PC-3 (cell line): ENCODE measurements at regions of chr11 and their contacts with region 1.

Region 1: DNA sequence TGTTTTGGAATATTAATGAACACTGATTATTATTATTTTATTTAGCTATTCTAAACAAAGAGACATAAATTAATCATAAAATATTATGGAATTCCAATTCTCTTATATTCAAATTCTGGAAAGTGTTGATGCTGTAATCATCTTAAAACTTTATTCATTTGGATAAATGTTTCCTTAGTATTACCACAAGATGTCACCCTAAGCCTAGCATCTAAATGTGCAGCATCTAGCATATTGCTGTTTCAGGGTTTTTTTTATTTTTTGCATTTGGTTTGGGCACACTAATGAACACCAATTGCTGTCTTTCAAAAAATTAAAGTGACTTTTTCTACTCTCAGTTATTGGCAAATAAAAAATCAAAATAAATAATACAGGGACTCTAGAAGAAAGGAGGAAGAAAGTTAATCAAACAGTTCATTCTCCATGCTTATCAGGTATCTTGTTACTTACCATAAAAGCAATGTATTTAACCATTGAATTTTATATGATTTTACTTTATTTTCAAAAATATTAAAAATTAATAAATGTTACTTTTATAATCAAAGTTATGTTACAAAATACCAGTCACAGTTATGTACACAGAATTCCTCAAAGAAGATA is 31.8 kb downstream of the DLG2 start:
- DNase-seq: peak; percentile 74
- ATAC-seq: peak; percentile 58
- H3K4me3 ChIP-seq: no peak overlapping the region
- H3K27ac ChIP-seq: no peak overlapping the region
- H3K4me1 ChIP-seq: no peaks in the 10 kb centered on the region
- H3K27me3 ChIP-seq: no peaks in the 10 kb centered on the region
- CTCF ChIP-seq: peak; percentile 89

Region 2: DNA sequence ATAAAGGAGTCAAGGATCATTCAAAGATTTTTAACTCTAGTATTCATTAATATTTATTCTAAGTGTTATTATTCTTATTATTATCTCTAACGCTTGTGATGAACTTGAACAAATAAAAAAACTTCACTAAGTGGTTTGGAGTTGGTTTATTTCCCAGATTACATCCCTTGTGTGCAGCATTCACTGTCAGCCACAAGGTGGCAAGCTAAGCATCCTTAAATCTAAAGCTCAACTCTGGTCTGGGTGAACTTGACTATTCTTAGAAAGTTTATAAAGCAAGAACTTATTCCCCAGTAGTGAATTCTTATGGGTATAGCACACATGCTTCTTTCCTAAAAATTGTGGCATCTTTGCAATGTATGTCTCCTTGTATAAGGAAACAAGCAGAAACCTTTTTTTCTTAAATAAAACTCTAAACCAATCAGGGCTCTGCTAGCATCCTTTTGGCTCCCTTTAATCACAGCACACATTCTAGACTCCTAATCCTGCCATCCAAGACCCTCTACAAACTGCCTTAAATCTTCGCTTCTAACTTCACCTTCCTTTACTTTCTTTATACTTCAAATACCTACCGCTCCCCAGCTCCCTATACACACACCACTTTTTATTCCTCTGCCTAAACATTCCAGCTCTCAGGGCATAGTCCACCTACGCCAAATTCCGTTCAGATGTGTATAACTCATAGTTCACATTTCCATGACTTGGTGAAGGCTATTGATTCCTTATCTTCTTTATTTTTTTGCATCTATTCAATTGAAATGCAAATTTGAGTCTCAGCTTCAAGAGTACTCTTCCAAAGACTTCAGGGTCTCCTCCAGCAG is 1037.1 kb before region 1 on chr11:
- CTCF ChIA-PET with region 1: interaction called, 5 read pairs
- POLR2A ChIA-PET with region 1: no interaction called
- intact Hi-C with region 1: loop called (anchors 1 kb)
- DNase-seq: peak; percentile 71
- ATAC-seq: peak; percentile 88
- H3K4me3 ChIP-seq: no peak overlapping the region
- H3K27ac ChIP-seq: no peak overlapping the region
- H3K4me1 ChIP-seq: no peaks in the 10 kb centered on the region
- H3K27me3 ChIP-seq: peaks cover 9% of the 10 kb centered on the region; the same call in 1 of the 2 replicates
- CTCF ChIP-seq: peak; percentile 87

Region 3: GRCh38 chr11:84800755-84801346 is 794.5 kb before region 1 on chr11:
- CTCF ChIA-PET with region 1: interaction called, 5 read pairs
- POLR2A ChIA-PET with region 1: no interaction called
- intact Hi-C with region 1: loop called (anchors 1 kb)
- DNase-seq: peak; percentile 83
- ATAC-seq: peak; percentile 62
- H3K4me3 ChIP-seq: no peak overlapping the region
- H3K27ac ChIP-seq: no peak overlapping the region
- H3K4me1 ChIP-seq: peaks cover 12% of the 10 kb centered on the region
- H3K27me3 ChIP-seq: 0 out of 2 replicates have a peak, but pooled peaks cover 6% of the 10 kb centered on the region
- CTCF ChIP-seq: peak; percentile 88

Region 4: DNA sequence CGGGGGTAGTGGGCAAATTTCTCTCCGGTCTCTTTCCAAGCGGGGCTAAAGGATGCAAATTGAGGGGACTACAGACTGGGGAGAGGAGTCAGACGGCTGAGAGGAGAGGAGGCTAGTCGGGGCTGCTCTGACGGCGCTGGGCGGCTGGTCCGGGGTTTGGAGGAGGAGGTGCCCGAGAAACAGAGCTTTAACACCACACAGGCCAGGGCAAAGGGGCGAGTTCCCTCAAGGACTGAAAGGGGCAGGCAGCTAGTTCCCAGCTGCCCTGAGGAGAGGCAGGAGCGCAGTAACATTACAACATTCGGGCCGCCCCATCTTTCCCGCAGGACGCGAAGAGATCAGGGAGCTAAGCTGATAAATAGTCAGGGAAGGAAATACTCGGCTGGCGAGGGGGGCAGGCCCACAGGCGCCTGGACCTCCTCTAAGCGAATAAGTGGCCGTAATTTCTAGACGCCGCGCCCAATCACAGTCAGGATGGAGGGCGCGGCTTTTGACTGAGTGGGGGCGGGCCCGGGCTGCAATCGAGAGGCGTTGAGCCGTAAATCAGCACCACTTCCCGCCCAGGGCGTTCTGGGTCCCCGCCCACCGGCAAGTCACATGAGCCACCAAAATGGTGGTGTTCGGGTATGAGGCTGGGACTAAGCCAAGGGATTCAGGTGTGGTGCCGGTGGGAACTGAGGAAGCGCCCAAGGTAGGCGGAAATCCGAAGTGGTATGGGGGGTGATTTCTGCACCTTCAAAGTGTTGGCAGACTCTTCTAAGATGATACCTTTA is 32.8 kb after region 1 on chr11 and contains the start of gene TMEM126B:
- CTCF ChIA-PET with region 1: no interaction called
- POLR2A ChIA-PET with region 1: no interaction called
- intact Hi-C with region 1: loop called (anchors 2 kb)
- DNase-seq: peak; percentile 99
- ATAC-seq: peak; percentile 97
- H3K4me3 ChIP-seq: peak within 1 kb of the TSS; percentile 83
- H3K27ac ChIP-seq: peak within 1 kb of the TSS; percentile 30
- H3K4me1 ChIP-seq: peaks cover 25% of the 10 kb centered on the region
- H3K27me3 ChIP-seq: no peaks in the 10 kb centered on the region
- CTCF ChIP-seq: no peak
- total RNA-seq, gene TMEM126B: 62.1 and 79.5 TPM in 2 replicates

Region 5: GRCh38 chr11:85694386-85694980 is 99.1 kb after region 1 on chr11:
- CTCF ChIA-PET with region 1: no interaction called
- POLR2A ChIA-PET with region 1: no interaction called
- intact Hi-C with region 1: loop called (anchors 5 kb)
- DNase-seq: peak; percentile 87
- ATAC-seq: peak; percentile 59
- H3K4me3 ChIP-seq: no peak overlapping the region
- H3K27ac ChIP-seq: peak overlapping the region; percentile 10; the same call in 1 of the 2 replicates
- H3K4me1 ChIP-seq: peaks cover 34% of the 10 kb centered on the region
- H3K27me3 ChIP-seq: no peaks in the 10 kb centered on the region
- CTCF ChIP-seq: peak; percentile 94

Region 6: DNA sequence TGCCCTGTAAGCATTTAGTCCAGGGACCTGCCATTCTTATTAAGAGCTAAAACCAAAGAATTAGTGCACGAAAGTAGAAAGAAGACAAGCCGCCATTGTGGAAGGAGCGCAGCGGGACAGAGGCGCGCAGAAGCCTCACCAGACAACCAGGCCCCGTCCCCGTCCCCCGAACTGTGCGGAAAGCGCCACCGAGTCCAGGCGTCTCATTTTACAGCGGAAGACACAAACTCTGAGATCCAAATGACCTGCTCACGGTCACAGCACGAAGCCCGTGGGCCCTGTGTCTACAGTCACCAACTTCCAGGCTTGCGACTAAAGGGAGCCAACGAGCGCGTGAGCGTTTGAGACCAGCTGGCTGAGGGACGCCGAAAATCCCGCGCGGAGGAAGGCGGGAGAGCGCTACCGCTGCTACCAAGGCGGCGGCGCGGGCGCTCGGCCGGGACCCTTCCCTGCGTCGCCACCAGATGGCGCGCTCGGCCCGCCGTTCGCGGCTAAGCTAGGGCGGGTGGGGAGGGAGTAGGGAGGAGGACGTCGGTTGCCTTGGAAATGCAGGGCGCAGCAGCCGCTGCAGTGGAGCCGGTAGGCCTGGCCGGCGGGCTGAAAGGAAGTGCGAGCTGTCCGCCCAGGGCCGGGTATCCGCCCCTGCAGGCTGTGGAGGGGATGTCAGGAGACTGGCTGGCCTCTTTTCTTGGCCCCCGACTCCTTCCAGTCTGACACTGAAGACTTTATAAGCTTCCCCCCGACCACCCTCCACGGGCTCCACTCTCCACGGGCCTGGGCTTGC is 259.4 kb after region 1 on chr11:
- CTCF ChIA-PET with region 1: no interaction called
- POLR2A ChIA-PET with region 1: no interaction called
- intact Hi-C with region 1: loop called (anchors 1 kb)
- DNase-seq: peak; percentile 99
- ATAC-seq: peak; percentile 94
- H3K4me3 ChIP-seq: peak overlapping the region; percentile 78
- H3K27ac ChIP-seq: peak overlapping the region; percentile 84
- H3K4me1 ChIP-seq: peaks cover 17% of the 10 kb centered on the region
- H3K27me3 ChIP-seq: no peaks in the 10 kb centered on the region
- CTCF ChIP-seq: peak; percentile 68